Calu3 (cell line): ENCODE measurements at regions of chr6 and their contacts with region 1.

Region 1: GRCh38 chr6:53103992-53104675 is 38.9 kb downstream of the FBXO9 start:
- DNase-seq: no peak
- H3K4me3 Mint-ChIP-seq: no peak overlapping the region
- H3K27ac Mint-ChIP-seq: no peak overlapping the region
- H3K4me1 Mint-ChIP-seq: peaks cover 23% of the 10 kb centered on the region
- H3K27me3 Mint-ChIP-seq: no peaks in the 10 kb centered on the region
- CTCF ChIP-seq: no peak

Region 2: GRCh38 chr6:53090576-53090975 is 13.6 kb before region 1 on chr6:
- CTCF ChIA-PET with region 1: no interaction called
- intact Hi-C with region 1: no loop called
- DNase-seq: no peak
- H3K4me3 Mint-ChIP-seq: no peak overlapping the region
- H3K27ac Mint-ChIP-seq: no peak overlapping the region
- H3K4me1 Mint-ChIP-seq: no peaks in the 10 kb centered on the region
- H3K27me3 Mint-ChIP-seq: no peaks in the 10 kb centered on the region
- CTCF ChIP-seq: no peak

Region 3: GRCh38 chr6:53128842-53129241 is 24.7 kb after region 1 on chr6:
- CTCF ChIA-PET with region 1: interaction called, 10 read pairs
- intact Hi-C with region 1: no loop called
- DNase-seq: peak; percentile 47
- H3K4me3 Mint-ChIP-seq: peak overlapping the region; percentile 39
- H3K27ac Mint-ChIP-seq: peak overlapping the region; percentile 84
- H3K4me1 Mint-ChIP-seq: peaks cover 46% of the 10 kb centered on the region
- H3K27me3 Mint-ChIP-seq: no peaks in the 10 kb centered on the region
- CTCF ChIP-seq: no peak

Region 4: DNA sequence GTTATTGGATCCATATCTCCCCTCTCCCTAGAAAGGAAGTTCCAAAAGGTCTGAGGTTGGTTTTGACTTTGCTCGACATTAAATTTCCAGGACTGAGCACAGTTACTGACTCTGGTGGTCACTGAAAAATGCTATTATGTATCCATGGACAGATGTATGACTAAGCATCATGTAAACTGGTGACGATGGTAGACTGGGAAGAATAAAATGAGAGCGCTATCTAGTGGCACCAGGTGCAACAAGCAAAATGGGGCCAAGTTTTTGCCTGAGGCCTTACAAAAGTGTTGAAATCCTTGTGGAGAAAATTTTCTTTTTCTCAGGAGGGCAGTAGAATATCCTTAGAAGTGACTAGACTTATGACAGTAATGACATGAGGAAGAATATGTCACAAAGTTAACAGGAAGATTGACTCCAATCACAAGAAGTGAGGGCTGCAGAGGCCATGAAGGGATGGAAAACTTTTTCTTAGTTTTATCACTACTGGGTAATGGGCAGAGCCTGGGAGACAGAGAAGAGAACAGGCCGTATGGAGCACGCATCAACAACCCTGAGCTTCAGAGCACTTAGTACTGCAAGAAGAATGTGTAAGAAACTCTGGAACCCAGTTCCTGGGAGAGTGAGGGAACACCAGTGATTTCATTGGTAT is 333.5 kb after region 1 on chr6:
- CTCF ChIA-PET with region 1: no interaction called
- intact Hi-C with region 1: loop called (anchors 1 kb)
- DNase-seq: peak; percentile 50
- H3K4me3 Mint-ChIP-seq: no peak overlapping the region
- H3K27ac Mint-ChIP-seq: no peak overlapping the region
- H3K4me1 Mint-ChIP-seq: peaks cover 8% of the 10 kb centered on the region
- H3K27me3 Mint-ChIP-seq: no peaks in the 10 kb centered on the region
- CTCF ChIP-seq: peak; percentile 52

Region 5: DNA sequence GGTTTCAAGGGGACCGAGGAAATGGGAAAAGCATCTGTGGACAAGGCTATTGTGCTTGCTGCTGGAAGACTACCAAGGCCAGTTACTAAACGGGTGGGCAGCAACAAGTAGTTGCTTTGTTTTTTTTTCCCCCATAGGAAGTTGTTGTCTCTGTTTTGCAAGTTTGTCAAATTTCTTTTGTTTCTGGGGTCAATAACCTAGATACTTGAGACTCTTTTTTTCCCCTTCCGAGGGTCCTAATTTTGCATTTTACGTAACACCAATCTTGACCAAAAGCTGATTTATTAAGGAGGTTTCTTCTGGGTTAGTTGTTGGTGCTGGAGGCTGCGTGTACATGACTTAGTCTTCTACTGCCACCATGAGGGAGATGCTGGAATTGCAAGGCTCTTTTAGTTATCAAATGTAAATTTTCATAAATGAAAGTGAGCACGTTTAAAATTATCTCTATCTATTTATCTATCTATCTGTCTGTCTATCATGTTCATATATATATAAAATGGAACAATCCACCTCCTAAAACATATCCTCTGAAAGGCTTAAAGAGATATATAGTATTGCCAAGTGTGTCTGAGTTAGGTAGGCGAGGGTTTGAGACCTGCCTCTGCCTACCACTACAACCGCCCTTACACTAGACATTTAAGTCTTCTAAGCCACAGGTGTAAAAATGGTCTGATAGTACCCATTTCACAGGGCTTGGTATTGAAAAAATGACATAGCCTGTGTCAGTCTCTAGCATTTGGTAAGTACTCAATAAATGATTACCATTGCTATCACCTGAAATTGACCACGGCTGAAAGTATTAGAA is 380.5 kb after region 1 on chr6:
- CTCF ChIA-PET with region 1: interaction called, 3 read pairs
- intact Hi-C with region 1: loop called (anchors 1 kb)
- DNase-seq: peak; percentile 64
- H3K4me3 Mint-ChIP-seq: no peak overlapping the region
- H3K27ac Mint-ChIP-seq: no peak overlapping the region
- H3K4me1 Mint-ChIP-seq: no peaks in the 10 kb centered on the region
- H3K27me3 Mint-ChIP-seq: no peaks in the 10 kb centered on the region
- CTCF ChIP-seq: peak; percentile 71